ENCODE measurements at regions of chr19 and their contacts with region 1.

Region 1: DNA sequence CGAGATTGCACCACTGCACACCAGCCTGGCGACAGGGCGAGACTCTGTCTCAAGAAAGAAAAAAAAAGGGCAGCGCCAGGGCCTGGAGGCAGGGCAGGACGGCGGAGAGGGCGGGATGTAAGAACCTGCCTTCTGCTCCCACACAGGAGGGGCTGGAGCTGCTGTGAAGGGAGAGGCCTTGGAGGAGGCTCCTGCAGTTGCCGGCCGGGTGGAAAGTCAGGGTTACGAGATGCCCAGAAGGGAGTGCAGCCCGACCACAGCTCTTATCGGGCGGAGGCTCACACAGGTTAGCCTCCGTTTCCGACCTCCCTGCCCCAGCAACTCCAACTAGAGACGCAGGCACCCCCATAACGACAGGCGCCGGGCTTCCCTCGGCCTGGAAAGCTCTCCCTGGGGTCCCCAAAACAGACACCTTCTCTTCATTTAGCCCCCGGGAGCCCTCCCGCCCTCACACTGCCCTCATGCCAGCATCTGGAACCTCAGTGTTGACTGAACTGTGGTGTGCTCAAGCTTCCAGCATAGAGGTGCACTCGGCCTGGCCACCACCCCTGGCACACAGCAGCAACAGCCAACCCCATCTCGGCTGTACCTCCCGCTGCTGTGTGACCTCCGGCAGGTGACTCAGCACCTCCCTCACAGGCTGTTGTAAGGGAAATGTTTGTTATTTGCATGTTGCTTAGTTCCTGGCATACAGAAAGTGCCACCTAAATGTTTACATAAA is 1.4 kb downstream of the PLPP2 start:
- DNase-seq: peak; percentile 71 to 76
- H3K4me3 ChIP-seq: peak overlapping the region; percentile 36 to 70 (median 55)
- H3K27ac ChIP-seq: peak overlapping the region; percentile 91
- H3K4me1 ChIP-seq: peaks cover 7 to 28% (median 24%) of the 10 kb centered on the region in 4 experiments
- H3K27me3 ChIP-seq: peaks cover 0 to 15% (median 8%) of the 10 kb centered on the region in 4 experiments; a peak in 3 of 7 replicates
- CTCF ChIP-seq: no peak
- EP300 ChIP-seq: no peak; a peak in 1 of 3 replicates
- POLR2A ChIP-seq: peak in 1 of 2 experiments; percentile 73; a peak in 2 of 3 replicates
- RAD21 ChIP-seq: no peak

Region 2: DNA sequence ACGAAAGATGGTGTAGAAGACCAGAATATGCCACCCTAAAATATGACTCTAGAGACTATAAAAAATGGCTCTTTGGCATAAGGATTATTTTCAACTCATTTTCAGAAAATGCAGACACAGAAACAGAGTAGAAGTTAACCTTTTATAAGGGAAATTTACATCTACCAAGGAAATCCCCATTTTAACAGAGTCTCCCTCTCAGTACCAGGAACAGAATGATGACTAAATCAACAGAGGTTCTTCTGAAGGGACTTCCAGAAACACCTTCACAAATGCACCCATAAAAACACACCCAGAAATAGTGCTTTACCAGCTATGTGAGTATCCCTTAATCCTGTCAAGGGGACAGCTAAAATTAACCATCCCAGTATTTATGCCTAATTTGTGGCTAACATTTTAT is 27.7 kb before region 1 on chr19:
- CTCF ChIA-PET with region 1: interaction called, 10 read pairs
- POLR2A ChIA-PET with region 1: interaction called, 7 read pairs
- DNase-seq: no peak
- H3K4me3 ChIP-seq: no peak overlapping the region
- H3K27ac ChIP-seq: no peak overlapping the region
- H3K4me1 ChIP-seq: peaks cover 0 to 1% (median 0%) of the 10 kb centered on the region in 4 experiments; a peak in 1 of 7 replicates
- H3K27me3 ChIP-seq: peaks cover 0 to 9% (median 6%) of the 10 kb centered on the region in 4 experiments; a peak in 5 of 7 replicates
- CTCF ChIP-seq: no peak
- EP300 ChIP-seq: no peak
- POLR2A ChIP-seq: no peak
- RAD21 ChIP-seq: no peak

Region 3: GRCh38 chr19:277581-278165 is 12.1 kb before region 1 on chr19:
- CTCF ChIA-PET with region 1: interaction called, 9 read pairs
- POLR2A ChIA-PET with region 1: interaction called, 88 read pairs
- DNase-seq: peak in 1 of 2 experiments; percentile 60
- H3K4me3 ChIP-seq: no peak overlapping the region
- H3K27ac ChIP-seq: no peak overlapping the region
- H3K4me1 ChIP-seq: peaks cover 0 to 9% (median 3%) of the 10 kb centered on the region in 4 experiments; a peak in 4 of 7 replicates
- H3K27me3 ChIP-seq: no peaks in the 10 kb centered on the region
- CTCF ChIP-seq: no peak
- EP300 ChIP-seq: no peak
- POLR2A ChIP-seq: no peak
- RAD21 ChIP-seq: no peak

Measured in H1 (cell line).